ENCODE measurements at regions of chr3 and their contacts with region 1.

Region 1: DNA sequence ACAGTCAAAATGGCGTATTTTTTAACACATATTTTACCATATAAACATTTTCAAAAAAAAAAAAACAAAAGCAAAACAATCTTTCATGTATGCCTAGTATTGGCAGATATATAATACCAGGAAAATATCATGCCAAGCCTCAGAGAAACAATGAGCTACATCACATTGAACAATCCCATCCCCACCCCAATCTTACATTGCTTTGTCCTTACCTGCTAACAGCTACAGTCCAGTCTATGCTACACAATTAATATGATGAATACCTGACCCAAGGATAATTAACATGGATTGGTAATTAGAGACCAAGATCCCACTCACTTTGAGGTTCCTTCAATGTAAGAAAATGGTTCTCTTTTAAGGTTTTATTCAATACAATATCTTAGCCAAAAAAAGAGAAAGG is 7.6 kb upstream of the SATB1 start:
- DNase-seq: peak; percentile 56
- H3K4me3 Mint-ChIP-seq: peak overlapping the region; percentile 82
- H3K27ac Mint-ChIP-seq: peak overlapping the region; percentile 88
- H3K4me1 Mint-ChIP-seq: peaks cover 52% of the 10 kb centered on the region
- H3K27me3 Mint-ChIP-seq: no peaks in the 10 kb centered on the region

Region 2: DNA sequence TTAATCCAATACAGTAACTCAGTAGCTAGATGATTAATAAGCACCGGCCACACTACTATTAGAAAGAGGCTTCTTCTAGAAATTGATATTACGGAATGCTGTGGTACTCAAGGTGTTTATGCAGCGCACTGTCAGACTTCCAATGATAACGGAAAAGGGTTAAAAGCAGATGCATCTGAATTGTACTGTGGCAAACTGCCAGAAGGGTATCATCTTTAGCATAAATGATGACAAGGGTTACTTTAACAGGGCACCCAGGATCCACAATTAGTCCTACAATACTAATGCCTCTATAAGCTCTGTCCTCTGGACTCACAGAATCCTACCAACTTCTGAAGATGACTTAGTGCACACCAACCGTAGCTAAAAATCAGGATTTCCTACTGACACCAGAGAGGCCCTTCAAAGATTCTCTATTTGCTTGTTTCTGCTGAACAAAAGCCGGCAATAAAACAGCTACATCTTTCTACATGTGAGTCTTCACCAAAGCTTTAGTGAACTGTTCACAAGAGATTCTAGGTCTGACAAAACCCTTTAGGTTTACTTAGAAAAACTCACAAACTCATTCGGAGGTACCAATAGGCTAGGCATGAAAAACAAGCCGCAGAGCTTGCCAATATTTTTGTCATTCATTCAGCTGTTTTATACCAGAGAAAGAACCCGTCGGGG is 14.7 kb before region 1 on chr3:
- intact Hi-C with region 1: loop called (anchors 1 kb)
- DNase-seq: no peak
- H3K4me3 Mint-ChIP-seq: peak overlapping the region; percentile 83
- H3K27ac Mint-ChIP-seq: peak overlapping the region; percentile 95
- H3K4me1 Mint-ChIP-seq: peaks cover 69% of the 10 kb centered on the region
- H3K27me3 Mint-ChIP-seq: no peaks in the 10 kb centered on the region

Measured in activated CD4-positive, alpha-beta T cell treated with anti-CD3 and anti-CD28 coated beads, Interleukin-2, amount 10 ng/mL, durations not matched to agents 24 days and 14 days (primary cell).